Activated CD4-positive, alpha-beta T cell treated with anti-CD3 and anti-CD28 coated beads for 36 hours (primary cell): ENCODE measurements at regions of chr5 and their contacts with region 1.

Region 1: DNA sequence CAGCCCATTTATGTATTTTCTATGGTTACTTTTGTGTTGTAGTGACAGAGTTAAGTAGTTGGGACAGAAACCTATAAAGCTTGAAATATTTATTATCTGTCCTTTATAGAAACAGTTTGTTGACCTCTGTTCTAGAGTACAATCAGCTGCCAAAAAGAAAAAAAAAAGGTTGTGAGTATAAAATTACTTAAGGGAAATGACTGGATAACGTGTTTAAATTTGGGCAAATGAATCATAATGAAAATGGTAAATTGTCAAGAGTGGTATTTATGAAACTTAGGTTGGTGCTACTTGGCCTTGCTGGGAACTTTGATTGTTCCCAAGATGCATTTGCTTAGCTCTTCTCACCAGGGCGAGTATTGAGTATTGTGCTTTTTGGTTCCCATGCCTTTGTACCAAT is 70.2 kb upstream of the IL6ST start:
- DNase-seq: no peak
- ATAC-seq: peak; percentile 61
- H3K4me3 Mint-ChIP-seq: no peak overlapping the region
- H3K27ac Mint-ChIP-seq: no peak overlapping the region
- H3K4me1 Mint-ChIP-seq: peaks cover 68% of the 10 kb centered on the region
- H3K27me3 Mint-ChIP-seq: peaks cover 1% of the 10 kb centered on the region

Region 2: GRCh38 chr5:55691265-55692105 is 373.5 kb before region 1 on chr5:
- CTCF ChIA-PET with region 1: no interaction called
- POLR2A ChIA-PET with region 1: no interaction called
- intact Hi-C with region 1: no loop called
- DNase-seq: no peak
- ATAC-seq: peak; percentile 36
- H3K4me3 Mint-ChIP-seq: no peak overlapping the region
- H3K27ac Mint-ChIP-seq: no peak overlapping the region
- H3K4me1 Mint-ChIP-seq: no peaks in the 10 kb centered on the region
- H3K27me3 Mint-ChIP-seq: no peaks in the 10 kb centered on the region

Region 3: GRCh38 chr5:56026863-56027300 is 38.1 kb before region 1 on chr5:
- CTCF ChIA-PET with region 1: no interaction called
- POLR2A ChIA-PET with region 1: no interaction called
- intact Hi-C with region 1: loop called in 1 of 2 experiments (anchors 2 kb)
- DNase-seq: no peak
- ATAC-seq: peak; percentile 92
- H3K4me3 Mint-ChIP-seq: no peak overlapping the region
- H3K27ac Mint-ChIP-seq: no peak overlapping the region
- H3K4me1 Mint-ChIP-seq: peaks cover 16% of the 10 kb centered on the region
- H3K27me3 Mint-ChIP-seq: no peaks in the 10 kb centered on the region

Region 4: DNA sequence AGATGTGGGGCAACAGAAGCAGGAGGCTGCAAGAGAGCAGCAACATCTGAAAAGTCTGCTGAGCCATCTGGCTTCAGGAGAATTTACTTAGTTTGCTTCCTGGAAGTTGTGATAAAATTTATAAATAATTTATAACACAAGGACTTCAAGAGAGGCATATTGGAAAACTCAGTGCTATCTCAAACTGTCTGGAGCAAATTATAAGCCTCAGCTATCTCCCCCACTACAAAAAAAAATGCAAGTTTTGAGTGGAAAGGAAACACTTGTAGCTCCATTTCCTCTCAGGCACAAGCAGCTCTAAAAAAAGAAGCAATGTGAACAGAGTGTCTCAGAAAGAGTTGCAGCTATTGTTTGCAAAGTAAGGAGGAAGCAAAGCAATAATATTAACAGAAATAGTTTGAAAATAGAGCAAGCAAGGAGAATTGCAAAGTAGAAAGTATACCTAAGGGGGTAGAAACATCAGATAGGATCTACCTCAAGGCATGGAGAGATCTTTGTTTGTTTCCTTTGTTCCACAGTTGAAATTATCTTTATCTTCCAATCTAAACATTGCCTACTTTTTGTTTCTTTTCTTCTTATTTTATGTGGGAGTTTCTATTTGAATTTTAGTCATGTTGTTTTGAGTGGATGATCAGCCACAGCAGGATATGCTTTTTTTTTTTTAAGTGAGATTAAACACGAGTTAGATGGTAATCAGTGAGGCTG is 14.3 kb before region 1 on chr5:
- CTCF ChIA-PET with region 1: interaction called, 3 read pairs
- POLR2A ChIA-PET with region 1: no interaction called
- intact Hi-C with region 1: loop called in 1 of 2 experiments (anchors 2 kb)
- DNase-seq: no peak
- ATAC-seq: peak; percentile 52
- H3K4me3 Mint-ChIP-seq: peak overlapping the region; percentile 5
- H3K27ac Mint-ChIP-seq: peak overlapping the region; percentile 55
- H3K4me1 Mint-ChIP-seq: peaks cover 62% of the 10 kb centered on the region
- H3K27me3 Mint-ChIP-seq: no peaks in the 10 kb centered on the region

Region 5: GRCh38 chr5:56080375-56081052 is 15.5 kb after region 1 on chr5:
- CTCF ChIA-PET with region 1: interaction called, 4 read pairs
- POLR2A ChIA-PET with region 1: interaction called, 3 read pairs
- intact Hi-C with region 1: loop called (anchors 2 kb)
- DNase-seq: peak; percentile 46
- ATAC-seq: peak; percentile 71
- H3K4me3 Mint-ChIP-seq: peak overlapping the region; percentile 43
- H3K27ac Mint-ChIP-seq: peak overlapping the region; percentile 92
- H3K4me1 Mint-ChIP-seq: peaks cover 54% of the 10 kb centered on the region
- H3K27me3 Mint-ChIP-seq: no peaks in the 10 kb centered on the region

Region 6: DNA sequence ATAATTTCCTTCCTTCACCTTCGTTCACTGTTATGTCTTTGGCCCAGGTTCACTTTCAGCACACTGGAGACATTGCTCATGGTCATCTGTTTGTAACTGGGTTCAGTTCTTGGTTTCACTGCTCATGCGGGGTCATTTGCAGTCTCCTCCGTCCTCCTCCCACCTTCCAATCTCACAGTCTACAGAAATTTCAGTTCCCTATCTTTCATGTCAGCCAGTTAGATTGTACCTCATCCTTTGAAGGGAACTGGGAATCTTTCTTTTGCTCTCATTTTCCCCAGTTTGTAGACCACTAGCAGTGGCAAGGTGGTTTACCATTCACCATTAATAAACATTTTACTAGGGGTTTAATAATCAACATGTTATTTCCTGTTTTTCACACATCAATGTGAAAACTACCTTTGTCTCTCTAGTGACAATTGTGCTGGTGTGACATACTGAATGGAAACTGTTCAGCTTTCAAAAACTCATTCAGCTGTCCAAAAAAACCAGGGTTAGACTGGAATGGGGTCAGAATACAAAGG is 30.7 kb after region 1 on chr5:
- CTCF ChIA-PET with region 1: interaction called, 3 read pairs
- POLR2A ChIA-PET with region 1: interaction called, 4 read pairs
- intact Hi-C with region 1: loop called in 1 of 2 experiments (anchors 2 kb)
- DNase-seq: no peak
- ATAC-seq: no peak
- H3K4me3 Mint-ChIP-seq: peak overlapping the region; percentile 36
- H3K27ac Mint-ChIP-seq: peak overlapping the region; percentile 84
- H3K4me1 Mint-ChIP-seq: peaks cover 89% of the 10 kb centered on the region
- H3K27me3 Mint-ChIP-seq: no peaks in the 10 kb centered on the region